ENCODE measurements at regions of chr16 and their contacts with region 1.

Region 1: DNA sequence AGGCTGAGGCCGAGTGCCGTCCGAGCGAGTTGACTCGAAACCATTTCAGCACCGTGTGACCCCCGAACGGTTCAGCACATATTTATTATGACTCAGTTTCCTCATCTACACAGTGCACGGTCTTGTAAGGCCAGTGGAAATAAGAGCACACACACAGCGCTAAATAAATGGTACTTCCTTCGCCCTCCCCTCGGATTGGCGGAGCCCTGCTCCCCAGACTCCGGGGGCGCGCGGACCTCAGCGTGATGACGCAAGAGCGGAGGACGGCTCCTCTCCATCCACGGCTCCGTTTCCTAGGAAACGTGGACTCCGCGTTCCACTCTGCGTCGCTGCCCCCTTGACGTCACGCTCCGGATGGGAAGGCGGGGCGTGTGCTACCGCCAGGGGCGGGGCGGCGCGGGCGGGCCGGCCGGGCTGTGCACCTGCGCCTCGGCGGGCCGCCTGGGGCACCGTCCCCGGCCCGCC is at the start of gene PARD6A:
- DNase-seq: peak; percentile 99
- ATAC-seq: peak; percentile 82
- H3K4me3 Mint-ChIP-seq: peak within 1 kb of the TSS; percentile 94
- H3K27ac Mint-ChIP-seq: peak within 1 kb of the TSS; percentile 97
- H3K4me1 Mint-ChIP-seq: peaks cover 20% of the 10 kb centered on the region
- H3K27me3 Mint-ChIP-seq: no peaks in the 10 kb centered on the region
- total RNA-seq, gene PARD6A: 15.2 to 15.5 TPM

Region 2: GRCh38 chr16:67393035-67393787 is 267.4 kb before region 1 on chr16 and contains the start of gene TPPP3:
- CTCF ChIA-PET with region 1: no interaction called
- DNase-seq: peak; percentile 58
- ATAC-seq: peak; percentile 66
- H3K4me3 Mint-ChIP-seq: no peak within 1 kb of the TSS
- H3K27ac Mint-ChIP-seq: no peak within 1 kb of the TSS
- H3K4me1 Mint-ChIP-seq: peaks cover 7% of the 10 kb centered on the region
- H3K27me3 Mint-ChIP-seq: peaks cover 40% of the 10 kb centered on the region
- total RNA-seq, gene TPPP3: not detected

Region 3: GRCh38 chr16:67672739-67673662 is 12.4 kb after region 1 on chr16:
- CTCF ChIA-PET with region 1: interaction called, 13 read pairs
- DNase-seq: peak; percentile 70
- ATAC-seq: peak; percentile 37
- H3K4me3 Mint-ChIP-seq: no peak overlapping the region
- H3K27ac Mint-ChIP-seq: no peak overlapping the region
- H3K4me1 Mint-ChIP-seq: peaks cover under 1% of the 10 kb centered on the region
- H3K27me3 Mint-ChIP-seq: no peaks in the 10 kb centered on the region

Region 4: DNA sequence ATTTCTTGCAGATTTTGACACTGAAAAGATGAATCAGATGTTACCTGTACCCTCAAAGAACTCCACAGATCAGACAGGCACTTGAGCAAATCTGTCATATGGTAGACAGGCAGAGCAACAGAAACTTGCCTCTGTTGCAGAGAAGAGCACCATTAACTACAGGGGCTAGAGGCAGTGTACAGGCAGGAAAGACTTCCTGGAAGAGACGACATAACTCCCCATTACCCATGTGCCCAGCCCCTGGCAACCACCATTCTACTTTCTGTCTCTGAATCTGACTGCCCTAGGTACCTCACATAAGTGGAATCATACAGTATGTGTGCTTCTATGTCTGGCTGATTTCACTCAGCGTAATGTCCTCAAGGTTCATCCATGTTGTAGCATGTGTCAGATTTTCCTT is 43.0 kb after region 1 on chr16:
- CTCF ChIA-PET with region 1: no interaction called
- DNase-seq: peak; percentile 48
- ATAC-seq: peak; percentile 78
- H3K4me3 Mint-ChIP-seq: no peak overlapping the region
- H3K27ac Mint-ChIP-seq: peak overlapping the region; percentile 74
- H3K4me1 Mint-ChIP-seq: peaks cover 17% of the 10 kb centered on the region
- H3K27me3 Mint-ChIP-seq: no peaks in the 10 kb centered on the region